ENCODE measurements at regions of chr4 and their contacts with region 1.

Region 1: GRCh38 chr4:7335344-7336069 is 99.2 kb downstream of the PSAPL1 start:
- DNase-seq: peak; percentile 81
- ATAC-seq: peak; percentile 98
- H3K4me3 Mint-ChIP-seq: no peak overlapping the region
- H3K27ac Mint-ChIP-seq: no peak overlapping the region
- H3K4me1 Mint-ChIP-seq: no peaks in the 10 kb centered on the region
- H3K27me3 Mint-ChIP-seq: no peaks in the 10 kb centered on the region
- CTCF ChIP-seq: peak; percentile 57

Region 2: GRCh38 chr4:7167706-7168105 is 167.8 kb before region 1 on chr4:
- CTCF ChIA-PET with region 1: no interaction called
- POLR2A ChIA-PET with region 1: no interaction called
- intact Hi-C with region 1: no loop called
- DNase-seq: no peak
- ATAC-seq: no peak
- H3K4me3 Mint-ChIP-seq: no peak overlapping the region
- H3K27ac Mint-ChIP-seq: no peak overlapping the region
- H3K4me1 Mint-ChIP-seq: peaks cover 5% of the 10 kb centered on the region
- H3K27me3 Mint-ChIP-seq: no peaks in the 10 kb centered on the region
- CTCF ChIP-seq: no peak

Region 3: DNA sequence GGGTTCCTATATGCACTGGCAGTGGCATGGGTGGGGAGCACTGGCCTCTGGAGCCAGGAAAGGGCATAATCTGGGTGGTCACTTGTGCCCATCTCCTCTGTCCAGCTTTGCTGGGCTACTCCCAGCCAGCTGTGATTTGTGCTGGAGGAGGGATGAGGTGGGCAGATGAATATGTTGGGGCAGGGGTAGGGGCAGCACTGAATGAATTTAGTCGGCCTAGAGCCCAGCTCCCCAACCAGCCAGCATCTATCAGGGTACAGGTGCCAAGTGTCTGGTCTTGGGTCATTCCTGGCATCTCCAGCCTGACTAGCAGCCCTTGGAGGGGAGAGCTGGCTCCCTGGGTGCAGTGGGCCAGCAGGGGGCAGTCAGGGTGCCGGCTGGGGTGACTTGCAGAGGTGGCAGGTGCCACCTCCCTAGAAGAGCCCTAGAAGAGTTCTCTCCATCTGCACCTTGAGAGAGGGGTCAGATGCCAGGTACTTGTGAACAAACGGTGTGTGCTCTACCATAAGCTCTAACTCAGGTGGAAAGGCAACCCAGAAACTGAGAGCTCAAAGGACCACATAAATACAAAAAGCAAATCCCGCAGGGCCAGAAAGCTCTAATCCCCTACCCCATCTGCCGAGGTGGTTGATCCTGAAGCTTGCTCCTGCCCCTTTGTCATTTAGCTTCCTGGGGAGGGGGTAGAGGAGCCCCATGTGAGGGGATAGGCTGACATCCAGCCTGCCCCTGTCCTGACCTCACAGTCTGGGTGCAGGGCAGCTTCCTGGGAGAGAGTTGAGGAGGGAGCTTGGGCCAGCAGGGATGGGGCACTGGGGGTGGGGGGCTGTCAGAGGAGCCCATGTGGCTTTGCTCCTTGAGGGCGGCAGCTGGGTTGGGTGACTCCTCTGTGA is 141.0 kb before region 1 on chr4:
- CTCF ChIA-PET with region 1: interaction called, 11 read pairs
- POLR2A ChIA-PET with region 1: no interaction called
- intact Hi-C with region 1: no loop called
- DNase-seq: peak; percentile 40
- ATAC-seq: no peak
- H3K4me3 Mint-ChIP-seq: no peak overlapping the region
- H3K27ac Mint-ChIP-seq: no peak overlapping the region
- H3K4me1 Mint-ChIP-seq: peaks cover 2% of the 10 kb centered on the region
- H3K27me3 Mint-ChIP-seq: peaks cover 28% of the 10 kb centered on the region
- CTCF ChIP-seq: peak; percentile 29

Region 4: GRCh38 chr4:7238300-7238960 is 97.1 kb before region 1 on chr4:
- CTCF ChIA-PET with region 1: interaction called, 10 read pairs
- POLR2A ChIA-PET with region 1: no interaction called
- intact Hi-C with region 1: no loop called
- DNase-seq: peak; percentile 27
- ATAC-seq: no peak
- H3K4me3 Mint-ChIP-seq: no peak overlapping the region
- H3K27ac Mint-ChIP-seq: no peak overlapping the region
- H3K4me1 Mint-ChIP-seq: no peaks in the 10 kb centered on the region
- H3K27me3 Mint-ChIP-seq: no peaks in the 10 kb centered on the region
- CTCF ChIP-seq: no peak

Measured in activated CD8-positive, alpha-beta T cell treated with anti-CD3 and anti-CD28 coated beads for 36 hours (primary cell).